Right ventricle myocardium inferior (tissue), 1 donor: ENCODE measurements at regions of chr18 and their contacts with region 1.

Region 1: DNA sequence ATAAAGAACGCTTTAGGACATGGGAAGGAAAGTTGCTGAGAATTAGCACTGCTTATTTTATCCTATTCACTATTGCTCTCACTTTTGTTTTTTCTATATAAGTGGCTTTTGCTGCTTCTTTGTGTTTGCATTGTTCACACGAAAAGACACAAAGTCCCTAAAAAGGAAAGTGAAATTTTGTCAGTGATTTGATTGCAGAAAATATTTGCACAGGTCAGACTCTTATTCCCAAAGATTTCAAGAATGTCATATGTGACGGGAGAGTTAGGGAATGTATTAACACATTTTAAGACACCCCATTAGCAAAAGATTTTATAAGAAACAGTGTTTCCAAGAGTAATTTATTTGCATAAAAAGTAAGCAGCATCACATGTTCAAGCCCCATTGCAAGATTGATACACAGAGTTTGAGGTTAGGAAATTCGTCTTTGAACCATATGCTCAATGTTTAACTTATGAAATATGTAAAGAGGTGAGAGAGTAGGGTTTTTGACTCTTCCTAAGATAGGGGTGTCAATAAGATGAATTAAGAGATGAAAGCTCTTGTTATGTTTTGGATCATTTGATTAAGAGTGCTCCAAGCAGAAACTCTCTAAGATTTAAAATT is 57.0 kb downstream of the CCDC102B start:
- DNase-seq: no peak
- ATAC-seq: no peak

Region 2: GRCh38 chr18:68796936-68797690 is 57.8 kb before region 1 on chr18:
- intact Hi-C with region 1: no loop called
- DNase-seq: no peak
- ATAC-seq: peak; percentile 88

Region 3: GRCh38 chr18:69161383-69162028 is 306.6 kb after region 1 on chr18:
- intact Hi-C with region 1: no loop called
- DNase-seq: no peak
- ATAC-seq: peak; percentile 63

Region 4: GRCh38 chr18:70082430-70082829 is 1227.5 kb after region 1 on chr18:
- intact Hi-C with region 1: loop called (anchors 5 kb)
- DNase-seq: no peak
- ATAC-seq: no peak